ENCODE measurements at regions of chr3 and their contacts with region 1.

Region 1: DNA sequence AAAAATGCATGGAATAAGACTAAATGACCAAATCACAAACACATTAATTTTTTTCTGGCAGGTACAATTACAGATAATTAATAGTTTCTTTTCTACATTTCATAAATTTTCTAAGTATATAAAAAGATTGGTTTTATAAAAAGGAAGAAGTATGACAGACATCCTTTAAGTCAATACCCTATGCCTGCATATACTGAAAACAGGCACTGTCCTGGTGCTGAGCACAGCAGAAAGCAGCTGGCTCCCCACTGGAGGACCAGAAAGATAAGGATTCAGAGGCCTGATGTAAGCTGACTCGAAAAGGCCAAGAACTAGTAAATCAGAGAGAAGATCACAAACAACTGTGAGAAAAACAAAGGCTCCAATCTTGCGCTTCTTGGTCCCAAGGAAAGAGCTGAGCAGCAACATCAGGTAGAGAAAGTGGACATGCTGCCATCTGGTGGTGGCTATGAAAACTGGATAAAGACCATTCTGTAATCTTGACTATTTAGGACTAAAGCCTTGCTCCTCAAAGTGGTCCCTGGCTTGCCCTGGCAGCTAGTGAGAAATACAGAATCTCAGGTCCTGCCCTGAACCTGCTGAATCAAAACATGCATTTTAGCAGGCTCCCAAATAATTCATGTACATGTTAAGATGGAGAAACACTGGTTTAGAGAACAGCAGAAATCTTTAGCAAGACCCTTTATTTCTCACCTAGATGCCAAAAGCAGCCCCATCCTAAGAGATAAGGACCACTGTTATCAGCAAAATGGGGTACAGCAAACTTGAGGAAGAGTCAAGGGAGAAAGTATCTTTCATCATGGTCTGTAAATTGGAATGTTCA is 76.0 kb downstream of the TRANK1 start:
- DNase-seq: peak; percentile 23 to 67
- H3K4me3 ChIP-seq: no peak overlapping the region
- H3K27ac ChIP-seq: no peak overlapping the region
- H3K4me1 ChIP-seq: peaks cover 0 to 3% (median 0%) of the 10 kb centered on the region in 4 experiments; a peak in 1 of 7 replicates
- H3K27me3 ChIP-seq: no peaks in the 10 kb centered on the region
- CTCF ChIP-seq: peak; percentile 8 to 88 (median 87)
- EP300 ChIP-seq: no peak
- POLR2A ChIP-seq: no peak
- RAD21 ChIP-seq: peak; percentile 89

Region 2: DNA sequence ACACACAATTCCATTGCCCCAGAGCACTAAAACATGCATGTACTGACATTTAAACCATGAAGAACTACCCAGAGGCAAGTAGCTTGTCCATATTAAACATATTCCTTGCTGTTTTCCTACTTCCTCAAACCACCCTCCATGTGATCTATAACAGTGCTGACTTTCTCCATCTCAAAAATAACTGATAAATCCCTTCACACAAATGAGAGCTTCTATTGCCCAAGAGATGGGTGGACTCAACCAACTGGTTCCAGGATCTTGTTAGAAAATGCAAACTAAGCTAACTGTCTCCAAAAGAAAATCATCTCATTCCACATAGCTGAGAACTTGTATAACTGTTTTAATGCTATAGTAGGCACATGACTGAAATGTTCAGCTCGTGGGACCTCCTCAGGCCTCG is 134.1 kb before region 1 on chr3:
- CTCF ChIA-PET with region 1: interaction called, 14 read pairs
- POLR2A ChIA-PET with region 1: interaction called, 3 read pairs
- DNase-seq: no peak
- H3K4me3 ChIP-seq: no peak overlapping the region
- H3K27ac ChIP-seq: no peak overlapping the region
- H3K4me1 ChIP-seq: no peaks in the 10 kb centered on the region
- H3K27me3 ChIP-seq: no peaks in the 10 kb centered on the region
- CTCF ChIP-seq: no peak
- EP300 ChIP-seq: no peak
- POLR2A ChIP-seq: no peak
- RAD21 ChIP-seq: no peak

Region 3: GRCh38 chr3:36786921-36787890 is 81.6 kb before region 1 on chr3:
- CTCF ChIA-PET with region 1: interaction called, 85 read pairs
- POLR2A ChIA-PET with region 1: interaction called, 3 read pairs
- DNase-seq: no peak
- H3K4me3 ChIP-seq: no peak overlapping the region
- H3K27ac ChIP-seq: no peak overlapping the region
- H3K4me1 ChIP-seq: no peaks in the 10 kb centered on the region
- H3K27me3 ChIP-seq: no peaks in the 10 kb centered on the region; a peak in 1 of 7 replicates
- CTCF ChIP-seq: no peak
- EP300 ChIP-seq: no peak
- POLR2A ChIP-seq: no peak
- RAD21 ChIP-seq: no peak

Region 4: DNA sequence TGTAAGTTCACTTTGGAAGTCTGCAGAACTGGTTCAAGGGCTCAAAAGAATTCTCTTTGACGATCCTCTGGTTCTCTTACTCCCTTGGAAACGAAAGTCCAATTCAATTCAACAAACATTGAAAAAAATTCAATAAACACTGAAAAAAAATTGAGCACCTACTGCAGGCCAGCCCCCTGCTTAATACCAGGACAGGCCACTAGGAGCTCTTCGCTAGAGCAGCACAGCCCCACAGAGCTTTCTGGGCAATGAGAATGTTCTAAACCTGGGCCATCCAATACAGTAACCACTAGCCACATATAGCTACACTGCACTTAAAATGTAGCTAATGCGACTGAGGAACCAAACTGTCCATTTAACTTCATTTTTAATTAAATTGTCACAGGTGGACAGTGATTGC is 54.0 kb before region 1 on chr3:
- CTCF ChIA-PET with region 1: interaction called, 11 read pairs
- POLR2A ChIA-PET with region 1: no interaction called
- DNase-seq: no peak
- H3K4me3 ChIP-seq: no peak overlapping the region
- H3K27ac ChIP-seq: no peak overlapping the region
- H3K4me1 ChIP-seq: no peaks in the 10 kb centered on the region; a peak in 2 of 7 replicates
- H3K27me3 ChIP-seq: no peaks in the 10 kb centered on the region
- CTCF ChIP-seq: peak; percentile 29 to 45 (median 32); a peak in 3 of 4 replicates
- EP300 ChIP-seq: no peak
- POLR2A ChIP-seq: no peak
- RAD21 ChIP-seq: peak in 1 of 2 experiments; percentile 20; a peak in 1 of 4 replicates

Region 5: GRCh38 chr3:36837089-36837488 is 31.7 kb before region 1 on chr3:
- CTCF ChIA-PET with region 1: interaction called, 32 read pairs
- POLR2A ChIA-PET with region 1: no interaction called
- DNase-seq: no peak
- H3K4me3 ChIP-seq: no peak overlapping the region
- H3K27ac ChIP-seq: no peak overlapping the region
- H3K4me1 ChIP-seq: no peaks in the 10 kb centered on the region
- H3K27me3 ChIP-seq: no peaks in the 10 kb centered on the region
- CTCF ChIP-seq: peak in 2 of 3 experiments; percentile 73 to 81; a peak in 3 of 4 replicates
- EP300 ChIP-seq: no peak
- POLR2A ChIP-seq: no peak
- RAD21 ChIP-seq: peak; percentile 73 to 78

Region 6: DNA sequence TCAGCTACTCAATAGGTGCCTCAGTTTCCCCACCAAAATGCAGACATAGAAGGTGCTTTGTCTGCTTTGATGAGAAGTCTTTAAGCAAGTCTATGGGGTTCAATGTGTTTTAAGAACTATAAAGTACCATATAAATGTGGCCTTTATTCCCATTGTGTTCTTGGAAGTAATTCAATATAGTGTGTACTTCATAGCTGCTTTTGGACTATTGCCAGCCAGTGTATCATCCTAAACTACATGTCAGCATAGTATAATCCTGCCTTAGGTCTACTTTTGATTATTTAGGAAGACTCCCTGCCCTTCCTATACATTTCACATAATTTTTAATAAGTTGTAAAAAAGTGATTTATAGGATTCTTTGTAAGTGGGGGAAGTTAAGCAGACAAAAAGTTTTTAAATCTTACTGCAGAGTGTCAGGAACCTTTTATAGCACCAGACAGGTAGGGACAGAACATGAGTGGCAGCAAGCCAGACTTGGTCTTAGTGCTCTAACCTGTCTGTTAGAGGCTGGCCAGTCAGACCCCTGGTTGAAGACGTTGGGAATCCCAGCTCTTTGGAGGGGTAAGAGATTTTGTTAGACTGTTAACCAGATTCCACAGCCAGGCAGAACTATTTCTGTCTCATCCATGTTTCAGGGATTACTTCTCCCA is 172.8 kb after region 1 on chr3:
- CTCF ChIA-PET with region 1: no interaction called
- POLR2A ChIA-PET with region 1: no interaction called
- DNase-seq: no peak
- H3K4me3 ChIP-seq: no peak overlapping the region
- H3K27ac ChIP-seq: no peak overlapping the region
- H3K4me1 ChIP-seq: no peaks in the 10 kb centered on the region
- H3K27me3 ChIP-seq: no peaks in the 10 kb centered on the region
- CTCF ChIP-seq: no peak
- EP300 ChIP-seq: no peak
- POLR2A ChIP-seq: no peak
- RAD21 ChIP-seq: no peak

Region 7: GRCh38 chr3:37197810-37198371 is 329.1 kb after region 1 on chr3:
- CTCF ChIA-PET with region 1: no interaction called
- POLR2A ChIA-PET with region 1: no interaction called
- DNase-seq: no peak
- H3K4me3 ChIP-seq: no peak overlapping the region
- H3K27ac ChIP-seq: no peak overlapping the region
- H3K4me1 ChIP-seq: no peaks in the 10 kb centered on the region
- H3K27me3 ChIP-seq: no peaks in the 10 kb centered on the region
- CTCF ChIP-seq: no peak
- EP300 ChIP-seq: no peak
- POLR2A ChIP-seq: no peak
- RAD21 ChIP-seq: no peak